ENCODE measurements at regions of chr2 and their contacts with region 1.

Region 1: GRCh38 chr2:3728104-3729054 is 25.0 kb downstream of the DCDC2C start:
- DNase-seq: no peak
- H3K4me3 ChIP-seq: peak overlapping the region in 15 of 59 donors; percentile 1 to 37 (median 12)
- H3K27ac ChIP-seq: peak overlapping the region in 1 of 59 donors; percentile 46
- H3K27me3 ChIP-seq: peaks cover 0 to 26% (median 5%) of the 10 kb centered on the region in 45 donors
- CTCF ChIP-seq: peak; percentile 50 to 81 (median 69)

Region 2: DNA sequence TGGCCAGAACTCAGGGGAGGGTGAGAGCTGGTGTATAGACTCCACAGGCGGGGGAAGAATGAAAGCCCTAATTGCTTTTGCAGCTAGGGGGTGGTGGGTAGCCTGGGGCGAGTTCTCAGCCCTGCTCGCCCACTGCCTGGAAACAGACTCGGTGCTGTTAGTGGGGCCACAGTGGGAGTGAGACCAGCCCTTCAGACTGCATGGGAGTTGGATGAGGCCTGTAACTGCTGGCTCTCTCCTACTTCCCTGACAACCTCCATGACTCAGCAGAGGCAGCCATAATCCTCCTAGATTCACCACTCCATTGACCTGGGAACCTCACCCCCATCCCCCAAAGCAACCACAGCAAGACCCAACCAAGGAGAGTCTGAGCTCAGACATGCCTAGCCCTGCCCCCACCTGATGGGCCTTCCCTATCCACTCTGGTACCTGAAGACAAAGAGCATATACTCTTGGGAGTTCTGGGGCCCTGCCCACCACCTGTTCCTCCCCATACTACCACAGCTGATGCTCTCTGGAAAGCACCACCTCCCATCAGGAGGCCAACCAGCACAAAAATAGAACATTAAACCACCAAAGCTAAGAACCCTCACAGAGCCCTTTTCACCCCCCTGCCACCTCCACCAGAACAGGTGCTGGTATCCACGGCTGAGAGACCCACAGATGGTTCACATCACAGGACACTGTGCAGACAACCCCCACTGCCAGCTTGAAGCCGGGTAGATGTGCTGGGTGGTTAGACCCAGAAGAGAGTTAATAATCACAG is 577.0 kb before region 1 on chr2:
- intact Hi-C with region 1: no loop called
- DNase-seq: no peak
- H3K4me3 ChIP-seq: no peak overlapping the region
- H3K27ac ChIP-seq: no peak overlapping the region
- H3K27me3 ChIP-seq: no peaks in the 10 kb centered on the region
- CTCF ChIP-seq: no peak

Region 3: DNA sequence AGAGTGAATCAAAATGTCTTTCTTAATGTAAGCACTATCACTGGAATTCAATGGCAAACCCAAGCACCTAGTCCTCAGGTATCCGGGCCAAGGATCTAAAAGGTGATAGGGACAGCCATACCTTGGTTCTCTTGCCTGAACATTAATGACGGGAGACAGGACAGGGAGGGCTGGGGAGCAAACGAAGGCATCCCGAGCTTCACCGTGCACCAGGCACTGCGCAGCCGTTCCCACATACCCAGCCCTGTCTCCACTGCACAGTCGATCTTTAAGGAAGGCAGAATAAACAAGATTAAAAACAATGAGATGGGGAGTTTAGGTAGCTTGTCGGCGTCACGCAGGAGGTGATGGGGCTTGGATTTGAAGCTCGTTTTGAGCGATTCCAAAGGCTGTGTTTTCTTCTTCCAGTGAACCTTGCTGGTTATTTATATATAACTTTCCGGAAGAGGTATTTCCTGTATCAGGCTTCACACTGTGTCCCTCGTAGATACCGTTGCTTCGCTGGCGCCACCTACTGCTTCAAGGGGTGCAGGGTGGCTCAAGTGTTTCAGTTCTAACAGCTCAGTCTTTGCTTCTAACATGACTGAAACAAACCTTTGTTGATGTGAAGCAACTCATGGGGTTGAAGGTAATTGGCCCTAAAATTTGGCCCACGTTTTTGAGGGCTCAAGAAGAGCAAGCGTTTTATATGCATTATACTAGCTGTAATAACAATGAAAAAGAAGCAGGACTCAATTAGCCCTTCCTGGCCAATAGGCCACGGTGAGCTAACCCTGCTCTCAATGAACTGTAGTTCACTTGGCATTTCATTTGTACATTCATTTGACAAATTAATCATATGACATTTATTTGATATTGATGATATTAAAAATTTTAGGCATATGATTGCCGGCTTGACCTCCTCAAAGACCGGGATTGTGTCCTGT is 52.4 kb after region 1 on chr2:
- intact Hi-C with region 1: loop called in 1 of 2 experiments (anchors 5 kb)
- DNase-seq: peak in 1 of 10 donors; percentile 24
- H3K4me3 ChIP-seq: peak overlapping the region in 1 of 59 donors; percentile 20
- H3K27ac ChIP-seq: no peak overlapping the region
- H3K27me3 ChIP-seq: peaks cover 0 to 52% (median 8%) of the 10 kb centered on the region in 45 donors
- CTCF ChIP-seq: peak in 53 of 56 donors; percentile 26 to 69 (median 46)

Measured in dorsolateral prefrontal cortex (tissue), 120 donors.